Heart right ventricle (tissue), 16 donors: ENCODE measurements at regions of chr15 and their contacts with region 1.

Region 1: GRCh38 chr15:47673232-47674080 is 43.8 kb upstream of the SEMA6D start:
- DNase-seq: peak in 1 of 2 donors; percentile 40
- ATAC-seq: peak in 7 of 8 donors; percentile 63 to 94 (median 78)
- H3K4me3 ChIP-seq: peak overlapping the region in 1 of 10 donors; percentile 15
- H3K27ac ChIP-seq: peak overlapping the region in 4 of 10 donors; percentile 17 to 67 (median 64)
- H3K4me1 ChIP-seq: peaks cover 3 to 26% (median 13%) of the 10 kb centered on the region in 9 donors
- H3K27me3 ChIP-seq: peaks cover 0 to 10% (median 0%) of the 10 kb centered on the region in 7 donors
- CTCF ChIP-seq: no peak

Region 2: GRCh38 chr15:47565949-47566348 is 107.5 kb before region 1 on chr15:
- intact Hi-C with region 1: loop called in 1 of 10 experiments (anchors 10 kb)
- DNase-seq: no peak
- ATAC-seq: no peak
- H3K4me3 ChIP-seq: no peak overlapping the region
- H3K27ac ChIP-seq: no peak overlapping the region
- H3K4me1 ChIP-seq: peaks cover 0 to 5% (median 0%) of the 10 kb centered on the region in 9 donors
- H3K27me3 ChIP-seq: no peaks in the 10 kb centered on the region
- CTCF ChIP-seq: no peak

Region 3: GRCh38 chr15:47711654-47712053 is 38.2 kb after region 1 on chr15:
- intact Hi-C with region 1: loop called in 1 of 10 experiments (anchors 5 kb)
- DNase-seq: no peak
- ATAC-seq: no peak
- H3K4me3 ChIP-seq: no peak overlapping the region
- H3K27ac ChIP-seq: no peak overlapping the region
- H3K4me1 ChIP-seq: peaks cover 0 to 14% (median 9%) of the 10 kb centered on the region in 9 donors
- H3K27me3 ChIP-seq: peaks cover 0 to 25% (median 0%) of the 10 kb centered on the region in 7 donors
- CTCF ChIP-seq: peak; percentile 22 to 70 (median 54)

Region 4: GRCh38 chr15:47756872-47757271 is 83.4 kb after region 1 on chr15:
- intact Hi-C with region 1: no loop called
- DNase-seq: peak in 1 of 2 donors; percentile 13
- ATAC-seq: peak in 6 of 8 donors; percentile 38 to 97 (median 66)
- H3K4me3 ChIP-seq: no peak overlapping the region
- H3K27ac ChIP-seq: peak overlapping the region in 1 of 10 donors; percentile 26
- H3K4me1 ChIP-seq: peaks cover 0 to 20% (median 0%) of the 10 kb centered on the region in 9 donors
- H3K27me3 ChIP-seq: no peaks in the 10 kb centered on the region
- CTCF ChIP-seq: no peak